Activated CD4-positive, alpha-beta T cell treated with anti-CD3 and anti-CD28 coated beads, Interleukin-2, amount 10 ng/mL, durations not matched to agents 24 days and 14 days (primary cell): ENCODE measurements at regions of chr10 and their contacts with region 1.

Region 1: GRCh38 chr10:101889256-101890210 is 45.9 kb upstream of the KCNIP2 start:
- DNase-seq: peak; percentile 92
- H3K4me3 Mint-ChIP-seq: no peak overlapping the region
- H3K27ac Mint-ChIP-seq: no peak overlapping the region
- H3K4me1 Mint-ChIP-seq: no peaks in the 10 kb centered on the region
- H3K27me3 Mint-ChIP-seq: no peaks in the 10 kb centered on the region

Region 2: GRCh38 chr10:101997803-101998202 is 108.3 kb after region 1 on chr10:
- intact Hi-C with region 1: no loop called
- DNase-seq: no peak
- H3K4me3 Mint-ChIP-seq: no peak overlapping the region
- H3K27ac Mint-ChIP-seq: no peak overlapping the region
- H3K4me1 Mint-ChIP-seq: peaks cover 16% of the 10 kb centered on the region
- H3K27me3 Mint-ChIP-seq: no peaks in the 10 kb centered on the region

Region 3: GRCh38 chr10:102009801-102010425 is 120.4 kb after region 1 on chr10:
- intact Hi-C with region 1: loop called (anchors 1 kb)
- DNase-seq: peak; percentile 85
- H3K4me3 Mint-ChIP-seq: no peak overlapping the region
- H3K27ac Mint-ChIP-seq: no peak overlapping the region
- H3K4me1 Mint-ChIP-seq: peaks cover 2% of the 10 kb centered on the region
- H3K27me3 Mint-ChIP-seq: no peaks in the 10 kb centered on the region

Region 4: DNA sequence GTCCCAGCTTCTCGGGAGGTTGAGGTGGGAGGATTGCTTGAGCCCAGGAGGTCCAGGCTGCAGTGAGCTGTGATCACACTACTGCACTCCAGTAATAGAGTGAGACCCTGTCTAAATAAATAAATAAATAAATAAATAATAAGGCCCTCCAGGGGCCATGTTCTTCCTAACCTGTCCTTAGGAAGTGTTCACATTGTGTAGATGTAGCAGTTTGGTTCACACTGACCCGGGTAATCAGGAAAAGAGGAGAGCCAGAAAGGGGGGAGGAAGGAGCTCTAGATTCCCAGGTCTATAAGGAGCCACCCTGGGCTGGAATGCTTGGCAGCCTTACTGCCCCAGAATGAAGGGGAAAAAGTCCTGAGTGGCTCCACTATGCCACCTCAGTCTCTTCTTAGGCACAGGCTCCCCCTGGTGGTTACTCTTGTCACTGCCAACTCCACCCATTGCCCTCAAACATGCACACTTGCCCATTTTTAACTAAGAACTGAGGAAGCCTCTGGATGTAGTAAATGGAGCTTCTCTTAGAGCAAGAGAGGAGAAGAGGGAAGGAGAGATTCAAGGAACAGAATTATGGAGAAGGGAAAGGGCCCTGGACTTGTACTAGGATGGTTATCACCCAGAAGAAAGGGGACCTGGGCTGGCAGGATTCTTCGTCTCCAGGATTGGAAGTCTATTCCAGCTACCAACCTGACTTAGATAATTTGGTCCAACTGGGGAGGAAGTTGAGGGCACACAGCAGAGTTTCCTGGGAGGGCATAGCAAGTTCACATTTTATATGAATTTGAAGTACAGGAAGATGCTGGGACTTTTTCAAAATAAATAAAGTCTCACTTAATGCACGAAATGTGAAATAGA is 183.4 kb after region 1 on chr10:
- intact Hi-C with region 1: loop called (anchors 1 kb)
- DNase-seq: peak; percentile 94
- H3K4me3 Mint-ChIP-seq: no peak overlapping the region
- H3K27ac Mint-ChIP-seq: no peak overlapping the region
- H3K4me1 Mint-ChIP-seq: peaks cover 2% of the 10 kb centered on the region
- H3K27me3 Mint-ChIP-seq: no peaks in the 10 kb centered on the region